Posterior vena cava (tissue), 2 donors: ENCODE measurements at regions of chr19 and their contacts with region 1.

Region 1: DNA sequence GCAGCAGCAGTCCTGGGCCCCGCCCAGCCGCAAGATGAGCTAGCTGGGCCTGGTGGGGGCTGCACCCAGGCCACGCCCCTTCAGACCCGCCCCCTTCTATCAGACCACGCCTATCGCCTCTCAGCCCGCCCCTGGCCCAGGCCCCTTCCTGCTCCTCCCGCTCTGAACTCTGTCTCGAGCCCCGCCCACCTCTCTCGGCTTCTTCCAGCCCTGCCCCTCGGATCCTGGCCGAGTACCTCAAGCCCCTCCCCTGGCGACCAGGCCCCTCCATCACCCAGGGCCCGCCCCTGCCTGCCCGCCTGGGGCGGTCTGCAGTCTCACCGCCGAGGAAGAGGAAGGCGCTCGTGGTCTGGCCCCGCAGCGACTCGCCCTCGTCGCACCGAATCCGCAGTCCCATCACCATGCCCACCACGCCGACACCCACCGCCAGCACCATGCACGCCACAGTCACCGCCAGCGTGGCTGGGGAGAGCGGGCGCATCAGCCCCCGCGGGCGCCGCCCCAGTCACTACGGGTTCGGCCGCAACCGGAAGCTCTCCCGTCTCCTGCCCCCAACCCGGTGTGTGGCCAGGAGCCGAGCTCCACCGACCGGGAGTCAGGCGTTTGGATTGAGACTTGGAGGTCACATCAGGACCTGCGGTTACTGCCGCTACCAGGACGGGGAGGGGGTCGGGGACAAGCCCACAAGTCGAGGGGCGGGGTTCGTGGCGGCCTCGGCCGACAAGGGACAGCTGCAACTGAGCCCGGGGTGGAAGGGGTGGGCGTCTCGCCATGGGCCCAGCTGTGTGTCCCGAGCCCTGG is 1.0 kb downstream of the CLDND2 start:
- DNase-seq: peak; percentile 100

Region 2: DNA sequence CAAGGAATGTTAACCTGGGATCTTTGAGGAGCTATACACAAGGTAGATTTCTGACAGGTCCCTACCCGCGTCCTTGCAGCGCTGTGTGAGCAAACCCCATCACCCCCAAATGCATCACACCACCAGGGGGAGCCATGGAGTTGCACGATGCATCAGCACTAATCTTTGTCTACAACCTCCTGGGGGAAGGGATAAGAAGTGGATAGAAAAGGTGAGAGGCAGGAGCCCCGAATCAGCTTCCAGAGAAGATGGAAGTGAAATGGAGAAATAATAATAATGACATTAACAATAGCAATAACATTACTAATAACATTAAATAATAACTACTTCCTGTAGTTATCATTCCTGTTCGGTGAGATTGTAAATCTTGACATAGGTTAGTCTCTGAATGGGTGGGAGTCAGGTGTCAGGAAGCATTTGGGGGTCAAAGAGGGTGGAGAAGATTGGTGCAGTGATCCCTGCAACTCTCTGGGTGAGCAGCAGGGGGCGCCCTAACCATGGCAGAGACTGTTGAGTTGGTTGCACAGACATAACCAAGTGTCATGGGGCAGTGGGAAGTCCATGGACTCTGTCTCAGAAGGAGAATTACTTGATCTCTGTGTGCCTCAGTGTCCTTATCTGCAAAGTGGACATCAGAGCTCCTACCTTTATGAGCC is 209.2 kb before region 1 on chr19:
- intact Hi-C with region 1: no loop called
- DNase-seq: no peak

Region 3: GRCh38 chr19:51393959-51394836 is 26.4 kb after region 1 on chr19:
- intact Hi-C with region 1: loop called in 1 of 2 experiments (anchors 2 kb)
- DNase-seq: peak; percentile 98